ENCODE measurements at regions of chr5 and their contacts with region 1.

Region 1: DNA sequence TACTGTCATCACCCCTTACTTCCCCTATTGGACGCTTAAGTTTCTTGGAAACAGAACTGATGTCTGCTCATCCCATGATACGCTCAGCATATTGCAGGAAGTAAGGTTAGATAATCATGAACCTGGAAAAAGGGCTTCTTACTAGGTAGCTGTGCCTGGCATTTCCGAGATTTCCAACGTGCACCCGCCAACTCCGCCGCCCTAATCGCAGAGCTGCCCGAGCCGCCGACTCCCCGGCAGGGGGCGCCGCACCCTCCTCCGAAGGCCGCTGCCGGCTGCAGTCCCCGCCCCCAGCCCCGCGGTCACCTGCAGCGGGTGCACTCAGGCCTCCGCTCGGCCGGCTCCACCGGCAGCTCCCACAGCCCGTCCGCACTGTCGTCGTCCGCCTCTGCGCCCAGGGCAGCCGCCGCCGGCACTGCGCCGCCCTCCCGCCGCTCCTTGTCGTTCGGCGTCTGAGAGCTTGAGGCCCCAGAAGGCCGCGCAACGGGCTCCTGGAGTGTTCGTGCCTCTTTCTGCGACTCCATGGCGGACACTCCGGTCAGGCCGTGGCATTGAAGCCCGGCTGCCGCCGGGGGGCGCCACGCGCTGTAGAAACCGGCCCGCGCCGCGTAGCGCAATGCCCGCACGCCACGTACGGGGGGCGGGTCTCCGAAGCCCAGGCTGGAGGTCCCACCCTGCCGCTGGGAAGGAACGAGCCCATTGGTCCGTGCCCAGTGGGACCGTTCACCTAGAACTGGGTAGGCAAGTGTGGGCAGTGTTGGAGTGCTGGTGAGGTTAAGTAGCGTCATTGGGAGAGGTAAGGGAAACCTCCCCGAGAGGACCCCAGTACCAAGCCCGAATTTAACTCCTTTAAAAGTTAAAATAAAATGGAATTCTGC is at the start of gene DTWD2:
- DNase-seq: peak; percentile 83 to 96 (median 89)
- ATAC-seq: peak; percentile 90
- H3K4me3 ChIP-seq: peak within 1 kb of the TSS; percentile 52
- H3K4me3 Mint-ChIP-seq: peak within 1 kb of the TSS; percentile 87
- H3K27ac ChIP-seq: peak within 1 kb of the TSS; percentile 54 to 70
- H3K27ac Mint-ChIP-seq: peak within 1 kb of the TSS; percentile 73
- H3K4me1 ChIP-seq: peaks cover 10% of the 10 kb centered on the region
- H3K4me1 Mint-ChIP-seq: peaks cover 31% of the 10 kb centered on the region
- H3K27me3 ChIP-seq: no peaks in the 10 kb centered on the region
- H3K27me3 Mint-ChIP-seq: no peaks in the 10 kb centered on the region
- CTCF ChIP-seq: peak; percentile 96
- total RNA-seq, gene DTWD2: 2.1 to 2.3 TPM

Region 2: GRCh38 chr5:119411935-119412602 is 423.8 kb after region 1 on chr5:
- CTCF ChIA-PET with region 1: interaction called, 15 read pairs
- POLR2A ChIA-PET with region 1: interaction called, 7 read pairs
- intact Hi-C with region 1: loop called (anchors 1 kb)
- DNase-seq: peak in 13 of 14 experiments; percentile 11 to 87 (median 43)
- ATAC-seq: peak; percentile 94
- H3K4me3 ChIP-seq: peak overlapping the region; percentile 62
- H3K4me3 Mint-ChIP-seq: peak overlapping the region; percentile 85
- H3K27ac ChIP-seq: no peak overlapping the region
- H3K27ac Mint-ChIP-seq: peak overlapping the region; percentile 31
- H3K4me1 ChIP-seq: peaks cover 8% of the 10 kb centered on the region
- H3K4me1 Mint-ChIP-seq: peaks cover 20% of the 10 kb centered on the region
- H3K27me3 ChIP-seq: no peaks in the 10 kb centered on the region
- H3K27me3 Mint-ChIP-seq: no peaks in the 10 kb centered on the region
- CTCF ChIP-seq: peak; percentile 92

Region 3: DNA sequence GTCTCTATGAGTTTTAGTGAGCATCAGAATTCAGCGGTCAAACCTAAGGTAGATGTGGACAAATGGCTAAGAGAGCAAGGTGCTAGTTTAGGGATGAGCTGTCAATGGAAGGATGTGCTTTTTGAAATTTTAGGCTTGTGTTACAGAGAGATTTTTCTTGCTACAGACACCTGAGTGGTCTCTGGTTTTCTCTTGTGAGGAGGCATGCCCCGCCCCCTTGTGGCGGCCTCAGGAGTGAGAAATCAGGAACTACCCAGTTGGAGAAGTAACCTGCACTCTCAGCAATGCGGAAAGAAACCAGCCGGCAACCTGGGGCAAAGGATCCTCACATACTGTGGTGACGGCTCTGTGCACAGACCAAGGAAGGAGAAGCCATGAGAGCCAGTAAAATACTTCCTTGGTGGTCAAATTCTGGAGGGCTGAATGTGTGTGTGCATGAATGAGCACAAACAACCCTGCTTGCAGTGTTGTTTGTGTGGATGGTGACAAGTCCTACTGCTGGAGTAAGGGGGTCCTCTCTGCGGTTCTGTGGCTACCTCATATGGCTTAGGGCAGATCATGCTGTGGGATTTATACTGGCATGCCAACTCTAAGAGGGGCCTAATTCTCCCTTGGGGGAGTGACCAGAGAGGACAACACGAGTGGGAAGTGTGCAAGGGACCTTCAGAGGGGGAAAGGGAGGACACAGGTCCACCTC is 447.4 kb after region 1 on chr5:
- CTCF ChIA-PET with region 1: interaction called, 8 read pairs
- POLR2A ChIA-PET with region 1: interaction called, 6 read pairs
- intact Hi-C with region 1: loop called (anchors 1 to 5 kb)
- DNase-seq: peak; percentile 58 to 82 (median 67)
- ATAC-seq: peak; percentile 83
- H3K4me3 ChIP-seq: no peak overlapping the region
- H3K4me3 Mint-ChIP-seq: no peak overlapping the region
- H3K27ac ChIP-seq: no peak overlapping the region
- H3K27ac Mint-ChIP-seq: no peak overlapping the region
- H3K4me1 ChIP-seq: peaks cover 10% of the 10 kb centered on the region
- H3K4me1 Mint-ChIP-seq: peaks cover 7% of the 10 kb centered on the region
- H3K27me3 ChIP-seq: peaks cover 0 to 5% of the 10 kb centered on the region in 2 experiments
- H3K27me3 Mint-ChIP-seq: peaks cover 49% of the 10 kb centered on the region
- CTCF ChIP-seq: peak; percentile 65

Region 4: DNA sequence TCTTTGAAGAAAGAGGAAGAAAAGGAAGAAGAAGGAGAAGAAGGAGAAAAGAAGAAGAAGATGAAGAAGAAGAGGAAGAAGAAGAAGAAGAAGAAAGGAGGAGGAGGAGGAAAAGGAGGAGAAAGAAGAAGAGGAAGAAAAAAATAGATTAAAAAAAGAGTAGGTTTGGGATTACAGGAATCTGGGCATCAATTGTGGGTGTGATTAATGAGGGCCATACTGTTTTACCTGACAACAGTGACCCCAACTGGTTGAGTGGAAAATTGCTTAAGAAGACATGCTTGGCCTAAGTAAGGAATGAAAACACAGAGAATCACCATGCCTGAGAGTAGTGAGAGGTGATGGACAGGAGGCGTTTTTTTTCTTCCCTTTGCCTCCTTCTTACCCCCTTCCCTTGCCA is 755.7 kb after region 1 on chr5:
- CTCF ChIA-PET with region 1: interaction called, 3 read pairs
- POLR2A ChIA-PET with region 1: no interaction called
- intact Hi-C with region 1: loop called (anchors 5 to 10 kb)
- DNase-seq: peak in 4 of 14 experiments; percentile 3 to 56 (median 40)
- ATAC-seq: no peak
- H3K4me3 ChIP-seq: no peak overlapping the region
- H3K4me3 Mint-ChIP-seq: no peak overlapping the region
- H3K27ac ChIP-seq: no peak overlapping the region
- H3K27ac Mint-ChIP-seq: no peak overlapping the region
- H3K4me1 ChIP-seq: no peaks in the 10 kb centered on the region
- H3K4me1 Mint-ChIP-seq: no peaks in the 10 kb centered on the region
- H3K27me3 ChIP-seq: no peaks in the 10 kb centered on the region
- H3K27me3 Mint-ChIP-seq: no peaks in the 10 kb centered on the region
- CTCF ChIP-seq: peak; percentile 50

Region 5: GRCh38 chr5:120457839-120458507 is 1469.7 kb after region 1 on chr5:
- CTCF ChIA-PET with region 1: no interaction called
- POLR2A ChIA-PET with region 1: no interaction called
- intact Hi-C with region 1: loop called in 1 of 2 experiments (anchors 2 kb)
- DNase-seq: peak in 10 of 14 experiments; percentile 1 to 64 (median 12)
- ATAC-seq: no peak
- H3K4me3 ChIP-seq: peak overlapping the region; percentile 51
- H3K4me3 Mint-ChIP-seq: peak overlapping the region; percentile 66
- H3K27ac ChIP-seq: no peak overlapping the region
- H3K27ac Mint-ChIP-seq: no peak overlapping the region
- H3K4me1 ChIP-seq: no peaks in the 10 kb centered on the region
- H3K4me1 Mint-ChIP-seq: peaks cover under 1% of the 10 kb centered on the region
- H3K27me3 ChIP-seq: no peaks in the 10 kb centered on the region
- H3K27me3 Mint-ChIP-seq: peaks cover 15% of the 10 kb centered on the region
- CTCF ChIP-seq: peak; percentile 32